K562 (cell line): ENCODE measurements at regions of chr9 and their contacts with region 1.

Region 1: DNA sequence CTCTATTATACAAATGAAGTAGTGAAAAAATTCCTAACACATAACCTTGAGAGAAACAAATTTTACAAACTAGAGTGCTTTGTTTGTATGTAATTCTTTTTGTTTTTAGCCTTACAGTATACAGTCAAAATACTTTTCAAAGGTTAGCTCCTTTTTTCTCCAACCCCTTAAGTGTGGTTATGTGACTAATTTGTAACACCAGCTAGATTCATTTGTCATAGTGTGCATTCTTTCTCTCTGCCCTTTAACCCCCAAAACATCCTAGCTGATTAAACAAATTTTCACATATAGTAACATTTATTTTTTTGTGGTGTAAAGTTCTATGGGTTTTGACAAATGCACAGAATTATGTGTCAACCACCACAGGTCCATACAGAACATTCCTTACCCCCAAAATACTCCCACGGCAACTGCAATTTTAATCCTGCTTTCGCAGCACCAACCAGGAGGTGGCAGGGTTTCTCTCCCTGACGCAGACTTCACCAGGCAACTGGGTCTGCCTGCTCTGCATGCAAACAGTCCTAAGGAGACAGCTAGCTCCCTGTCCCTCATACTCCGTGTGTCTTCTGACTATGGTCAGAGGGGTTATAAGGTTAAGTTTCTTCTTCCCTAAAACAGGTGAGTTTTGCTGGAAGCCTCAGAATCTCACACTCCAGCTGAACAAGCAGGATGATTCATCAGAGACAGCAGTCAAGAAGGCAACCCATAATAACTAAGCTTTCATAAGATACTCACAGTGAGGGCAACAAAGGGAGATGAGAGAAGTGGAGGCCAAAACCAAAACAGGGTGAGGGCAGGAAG is 44.5 kb upstream of the NR5A1 start:
- DNase-seq: peak; percentile 38 to 70 (median 56)
- ATAC-seq: peak; percentile 95
- H3K4me3 ChIP-seq: no peak overlapping the region
- H3K27ac ChIP-seq: no peak overlapping the region
- H3K4me1 ChIP-seq: no peaks in the 10 kb centered on the region
- H3K27me3 ChIP-seq: no peaks in the 10 kb centered on the region
- CTCF ChIP-seq: peak; percentile 77 to 80 (median 80)
- EP300 ChIP-seq: no peak
- POLR2A ChIP-seq: no peak
- RAD21 ChIP-seq: peak; percentile 77 to 84

Region 2: DNA sequence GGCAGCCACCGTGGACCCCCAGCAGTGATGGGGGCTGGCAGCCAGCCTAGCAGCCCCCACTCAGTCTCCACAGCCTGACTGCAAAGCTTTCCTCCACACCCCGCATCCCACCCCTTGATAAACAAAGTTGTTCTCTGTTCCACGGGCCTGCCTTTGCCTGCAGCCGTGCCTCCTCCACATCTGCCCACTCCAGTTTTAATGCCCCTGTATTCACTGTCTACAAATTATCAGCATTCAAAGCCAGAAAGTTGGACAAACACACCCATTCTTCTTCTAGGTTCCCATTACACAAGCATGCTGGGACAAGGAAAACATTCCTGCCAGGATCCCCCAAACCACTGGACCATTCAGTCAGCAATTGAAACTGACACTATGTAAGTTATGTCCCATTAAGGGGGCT is 21.4 kb before region 1 on chr9:
- CTCF ChIA-PET with region 1: no interaction called
- POLR2A ChIA-PET with region 1: no interaction called
- in situ Hi-C with region 1: no loop called
- intact Hi-C with region 1: no loop called
- DNase-seq: no peak
- ATAC-seq: no peak
- H3K4me3 ChIP-seq: no peak overlapping the region
- H3K27ac ChIP-seq: no peak overlapping the region
- H3K4me1 ChIP-seq: no peaks in the 10 kb centered on the region; a peak in 1 of 5 replicates
- H3K27me3 ChIP-seq: no peaks in the 10 kb centered on the region
- CTCF ChIP-seq: no peak
- EP300 ChIP-seq: no peak
- POLR2A ChIP-seq: no peak
- RAD21 ChIP-seq: no peak

Region 3: GRCh38 chr9:124697326-124698200 is 145.9 kb after region 1 on chr9:
- CTCF ChIA-PET with region 1: no interaction called
- POLR2A ChIA-PET with region 1: no interaction called
- in situ Hi-C with region 1: no loop called
- intact Hi-C with region 1: no loop called
- DNase-seq: no peak
- ATAC-seq: no peak
- H3K4me3 ChIP-seq: no peak overlapping the region
- H3K27ac ChIP-seq: no peak overlapping the region
- H3K4me1 ChIP-seq: peaks cover 7 to 14% of the 10 kb centered on the region in 2 experiments; a peak in 4 of 5 replicates
- H3K27me3 ChIP-seq: no peaks in the 10 kb centered on the region
- CTCF ChIP-seq: no peak
- EP300 ChIP-seq: no peak
- POLR2A ChIP-seq: no peak
- RAD21 ChIP-seq: no peak

Region 4: DNA sequence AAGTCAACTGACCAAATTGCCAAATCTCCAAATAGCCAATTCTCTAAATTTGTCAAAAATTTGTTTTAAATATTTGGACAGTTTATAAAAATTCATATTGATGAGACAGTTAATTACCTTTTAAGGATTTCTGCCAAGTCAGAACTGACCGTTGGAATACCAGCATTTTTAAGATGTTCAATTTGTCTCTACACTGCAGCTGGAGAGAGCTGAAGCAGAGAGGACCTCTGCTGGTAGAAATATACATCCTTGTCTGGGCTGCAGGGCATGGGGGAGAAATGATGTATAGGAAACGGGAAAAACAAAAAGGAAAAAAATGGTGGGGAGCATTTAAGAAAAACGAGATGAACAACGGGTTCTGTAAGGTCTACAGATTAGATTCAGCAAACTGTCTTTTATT is 202.6 kb after region 1 on chr9:
- CTCF ChIA-PET with region 1: no interaction called
- POLR2A ChIA-PET with region 1: interaction called, 3 read pairs
- in situ Hi-C with region 1: no loop called
- intact Hi-C with region 1: loop called (anchors 5 kb)
- DNase-seq: peak in 3 of 4 experiments; percentile 27 to 60 (median 44)
- ATAC-seq: peak; percentile 83
- H3K4me3 ChIP-seq: no peak overlapping the region
- H3K27ac ChIP-seq: peak overlapping the region; percentile 68; the same call in 2 of the 3 replicates
- H3K4me1 ChIP-seq: peaks cover 0 to 40% of the 10 kb centered on the region in 2 experiments; a peak in 3 of 5 replicates
- H3K27me3 ChIP-seq: no peaks in the 10 kb centered on the region
- CTCF ChIP-seq: peak; percentile 64 to 75 (median 75)
- EP300 ChIP-seq: peak; percentile 52
- POLR2A ChIP-seq: no peak
- RAD21 ChIP-seq: peak; percentile 72 to 81